RWPE1 (cell line): ENCODE measurements at regions of chr10 and their contacts with region 1.

Region 1: DNA sequence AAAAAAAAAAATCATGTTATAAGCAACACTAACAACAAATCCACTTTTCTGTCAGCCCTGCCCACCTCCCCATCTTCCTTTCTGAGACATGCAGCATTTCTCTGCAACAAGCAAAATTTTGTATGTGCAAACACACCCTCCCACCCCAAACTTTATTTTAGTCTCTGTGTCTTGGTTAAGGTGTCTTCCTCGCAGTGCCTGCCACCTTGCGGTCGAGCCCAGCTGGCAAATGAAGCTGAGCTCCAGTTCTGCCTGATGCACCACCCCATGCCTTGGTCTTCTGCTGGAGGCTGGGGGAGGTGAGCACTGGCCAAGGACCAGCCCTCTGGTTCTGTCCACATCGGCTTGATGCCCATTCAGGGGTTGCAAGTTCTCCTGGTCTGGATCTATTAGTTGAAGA is 206.3 kb downstream of the MGMT start:
- DNase-seq: no peak
- H3K27ac ChIP-seq: no peak overlapping the region
- CTCF ChIP-seq: no peak

Region 2: GRCh38 chr10:129288999-129289398 is 384.3 kb before region 1 on chr10:
- CTCF ChIA-PET with region 1: interaction called, 13 read pairs
- POLR2A ChIA-PET with region 1: no interaction called
- DNase-seq: no peak
- H3K27ac ChIP-seq: no peak overlapping the region
- CTCF ChIP-seq: no peak